GM12878 (cell line): ENCODE measurements at regions of chr3 and their contacts with region 1.

Region 1: DNA sequence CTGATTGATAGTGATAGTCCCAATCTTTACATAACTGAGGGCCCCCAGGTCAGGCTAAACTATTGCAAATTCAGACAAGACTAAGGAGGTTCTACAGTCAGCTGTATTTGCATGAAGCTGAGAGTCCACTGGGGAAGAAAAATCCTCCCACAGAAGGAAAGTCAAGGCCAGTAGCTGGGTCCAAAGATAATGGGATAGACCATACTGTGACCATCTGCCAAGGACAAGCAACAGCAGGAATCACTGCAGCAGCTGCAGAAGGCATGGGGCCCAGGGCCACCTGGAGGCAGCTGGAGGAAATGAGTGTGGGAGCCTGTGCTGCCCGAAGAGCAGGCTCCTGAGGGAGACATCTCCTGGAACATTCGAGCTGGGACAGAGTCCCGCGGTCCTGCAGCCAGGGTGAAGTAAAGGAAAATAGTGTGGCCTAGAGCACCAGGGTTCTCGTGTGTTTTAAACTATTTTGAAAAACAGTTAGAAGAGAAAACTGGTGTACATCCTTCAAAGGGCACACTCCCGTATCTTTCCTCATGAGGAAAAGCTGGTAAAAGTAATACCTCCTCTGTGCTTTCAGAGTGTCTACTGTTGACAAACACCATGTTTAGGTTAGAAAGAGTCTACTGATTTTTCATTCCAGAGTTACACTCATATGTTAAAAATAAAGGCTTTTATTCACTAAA is 13.2 kb upstream of the TMEM212 start:
- DNase-seq: no peak
- ATAC-seq: peak; percentile 85
- H3K4me3 ChIP-seq: no peak overlapping the region
- H3K27ac ChIP-seq: no peak overlapping the region
- H3K4me1 ChIP-seq: no peaks in the 10 kb centered on the region
- H3K27me3 ChIP-seq: no peaks in the 10 kb centered on the region; a peak in 1 of 4 replicates
- CTCF ChIP-seq: peak; percentile 52 to 80 (median 74)
- EP300 ChIP-seq: no peak
- POLR2A ChIP-seq: no peak
- RAD21 ChIP-seq: peak; percentile 53

Region 2: DNA sequence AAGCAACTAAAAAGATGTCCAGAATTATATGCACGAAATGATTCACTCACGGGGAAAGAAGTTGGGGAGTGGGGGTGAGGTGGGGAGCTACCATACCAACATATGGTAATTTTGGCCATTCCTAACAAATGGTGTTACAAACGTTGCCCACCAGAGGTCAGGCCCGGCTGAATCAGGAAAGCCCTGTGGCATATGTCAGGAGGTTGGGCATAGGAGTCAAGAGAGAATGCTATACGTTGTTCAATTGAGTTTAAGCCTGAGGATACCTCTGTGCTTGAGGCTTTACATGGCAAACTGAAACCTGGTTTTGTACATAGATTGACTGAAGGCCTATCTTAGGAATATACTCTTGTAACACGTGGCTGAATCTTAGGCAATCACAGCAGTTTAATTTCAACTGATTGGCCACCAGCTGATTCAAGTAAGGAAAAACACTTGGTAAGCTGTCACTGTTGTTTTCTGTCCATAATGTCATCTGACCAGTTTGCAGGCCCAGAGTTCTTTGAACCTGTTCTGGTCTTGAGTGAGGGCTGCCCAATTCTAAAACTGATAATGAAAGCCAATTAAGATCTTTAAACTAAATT is 780.0 kb before region 1 on chr3:
- CTCF ChIA-PET with region 1: interaction called, 12 read pairs
- POLR2A ChIA-PET with region 1: no interaction called
- RAD21 ChIA-PET with region 1: interaction called, 13 read pairs
- SMC1A ChIA-PET with region 1: interaction called, 18 read pairs
- in situ Hi-C with region 1: no loop called
- intact Hi-C with region 1: loop called (anchors 10 kb)
- DNase-seq: peak; percentile 34
- ATAC-seq: peak; percentile 91
- H3K4me3 ChIP-seq: no peak overlapping the region
- H3K27ac ChIP-seq: no peak overlapping the region
- H3K4me1 ChIP-seq: no peaks in the 10 kb centered on the region
- H3K27me3 ChIP-seq: no peaks in the 10 kb centered on the region
- CTCF ChIP-seq: peak; percentile 65 to 81 (median 72)
- EP300 ChIP-seq: no peak
- POLR2A ChIP-seq: no peak
- RAD21 ChIP-seq: peak; percentile 87

Region 3: DNA sequence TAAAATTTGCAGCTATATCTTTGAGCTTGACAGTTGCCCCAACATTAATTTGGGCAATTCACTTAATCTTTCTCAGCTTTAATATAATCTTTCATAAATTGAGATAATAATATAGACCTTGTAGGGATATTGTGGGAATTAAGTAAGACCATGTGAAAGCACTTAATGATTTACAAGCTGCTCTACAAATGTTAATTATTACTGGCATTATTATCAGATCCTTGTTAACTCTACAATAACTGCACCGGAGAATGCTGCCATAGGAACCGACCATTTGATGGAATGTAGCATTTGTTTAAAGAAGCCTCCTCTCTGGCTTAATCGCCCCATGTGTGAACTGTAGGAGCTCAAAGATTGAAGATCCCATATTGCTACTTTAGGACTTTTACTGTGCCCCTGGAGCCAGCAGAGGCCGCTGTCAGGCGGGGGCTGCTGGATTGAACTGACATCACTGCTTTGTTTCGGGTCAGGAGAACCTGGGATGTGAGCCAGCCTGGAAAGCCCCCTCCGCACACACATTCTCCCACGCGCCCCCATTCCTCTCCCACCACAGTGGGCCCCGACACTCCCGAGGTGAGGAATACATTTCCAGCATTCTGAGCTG is 215.6 kb before region 1 on chr3:
- CTCF ChIA-PET with region 1: interaction called, 60 read pairs
- POLR2A ChIA-PET with region 1: interaction called, 3 read pairs
- RAD21 ChIA-PET with region 1: interaction called, 46 read pairs
- SMC1A ChIA-PET with region 1: interaction called, 39 read pairs
- in situ Hi-C with region 1: no loop called
- intact Hi-C with region 1: loop called (anchors 2 kb)
- DNase-seq: no peak
- ATAC-seq: peak; percentile 83
- H3K4me3 ChIP-seq: no peak overlapping the region
- H3K27ac ChIP-seq: no peak overlapping the region
- H3K4me1 ChIP-seq: no peaks in the 10 kb centered on the region
- H3K27me3 ChIP-seq: no peaks in the 10 kb centered on the region; a peak in 1 of 4 replicates
- CTCF ChIP-seq: peak; percentile 64 to 83 (median 67)
- EP300 ChIP-seq: no peak
- POLR2A ChIP-seq: no peak
- RAD21 ChIP-seq: peak; percentile 63

Region 4: DNA sequence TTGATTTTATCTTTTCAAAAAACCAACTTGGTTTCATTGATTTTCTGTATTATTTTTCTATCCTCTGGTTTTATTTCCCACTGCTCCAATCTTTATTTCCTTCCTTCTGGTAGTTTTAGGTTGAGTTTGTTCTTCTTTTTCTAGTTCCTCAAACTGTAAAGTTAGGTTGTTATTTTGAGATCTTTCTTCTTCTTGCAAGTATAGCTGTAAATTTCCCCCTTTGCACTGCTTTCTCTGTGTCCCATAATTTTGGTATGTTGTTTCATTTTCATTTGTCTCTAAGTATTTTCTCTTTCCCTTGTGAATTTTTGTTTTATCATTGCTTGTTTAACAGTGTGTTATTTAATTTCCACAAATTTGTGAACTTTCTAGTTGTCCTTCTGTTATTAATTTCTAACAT is 139.7 kb before region 1 on chr3:
- CTCF ChIA-PET with region 1: interaction called, 15 read pairs
- POLR2A ChIA-PET with region 1: no interaction called
- RAD21 ChIA-PET with region 1: interaction called, 5 read pairs
- SMC1A ChIA-PET with region 1: interaction called, 23 read pairs
- in situ Hi-C with region 1: no loop called
- intact Hi-C with region 1: no loop called
- DNase-seq: peak; percentile 21
- ATAC-seq: peak; percentile 74
- H3K4me3 ChIP-seq: no peak overlapping the region
- H3K27ac ChIP-seq: peak overlapping the region; percentile 23
- H3K4me1 ChIP-seq: peaks cover 3% of the 10 kb centered on the region; the same call in 1 of the 2 replicates
- H3K27me3 ChIP-seq: no peaks in the 10 kb centered on the region
- CTCF ChIP-seq: no peak
- EP300 ChIP-seq: no peak
- POLR2A ChIP-seq: no peak
- RAD21 ChIP-seq: no peak

Region 5: DNA sequence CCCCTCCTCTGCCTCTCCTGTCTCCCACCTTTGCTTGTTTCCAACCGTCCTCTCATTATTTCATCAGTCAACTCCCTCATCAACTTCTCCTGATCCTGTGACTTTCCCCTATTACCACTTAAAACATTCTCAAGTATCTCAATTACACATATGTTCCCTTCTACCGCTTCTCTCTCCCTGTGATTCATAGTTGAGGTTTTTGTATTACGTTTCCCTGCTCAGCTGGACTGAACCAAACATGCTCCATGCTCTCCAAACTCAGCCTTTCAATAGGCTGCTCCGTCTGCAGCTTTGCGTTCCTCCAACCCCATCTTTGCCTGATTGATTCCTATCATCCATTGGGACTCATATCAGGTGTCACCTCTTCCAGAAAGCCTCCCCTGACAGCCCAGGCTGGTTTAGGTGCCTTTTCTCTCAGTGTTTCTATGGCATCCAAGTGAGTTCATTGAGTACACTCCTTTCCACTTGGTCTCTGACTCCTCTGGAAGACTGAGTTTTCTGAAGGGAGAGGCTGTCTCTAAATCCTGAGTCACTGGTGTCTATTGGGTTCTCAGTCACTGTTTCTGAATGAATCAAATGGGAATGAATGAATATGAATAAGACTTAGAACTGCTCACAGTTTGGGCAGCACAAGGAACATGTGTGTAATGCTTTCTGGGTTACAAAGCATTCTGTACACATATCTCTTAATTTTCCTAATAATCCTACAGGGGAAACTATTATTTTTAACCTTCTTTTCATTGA is 76.1 kb before region 1 on chr3:
- CTCF ChIA-PET with region 1: interaction called, 17 read pairs
- POLR2A ChIA-PET with region 1: interaction called, 3 read pairs
- RAD21 ChIA-PET with region 1: interaction called, 18 read pairs
- SMC1A ChIA-PET with region 1: interaction called, 25 read pairs
- in situ Hi-C with region 1: no loop called
- intact Hi-C with region 1: no loop called
- DNase-seq: no peak
- ATAC-seq: peak; percentile 13; the same call in 2 of the 3 replicates
- H3K4me3 ChIP-seq: no peak overlapping the region
- H3K27ac ChIP-seq: no peak overlapping the region; the same call in 1 of the 2 replicates
- H3K4me1 ChIP-seq: no peaks in the 10 kb centered on the region; the same call in 1 of the 2 replicates
- H3K27me3 ChIP-seq: peaks cover 0 to 3% of the 10 kb centered on the region in 2 experiments; a peak in 1 of 4 replicates
- CTCF ChIP-seq: no peak
- EP300 ChIP-seq: no peak
- POLR2A ChIP-seq: no peak
- RAD21 ChIP-seq: no peak

Region 6: GRCh38 chr3:171796625-171797264 is 33.2 kb before region 1 on chr3:
- CTCF ChIA-PET with region 1: interaction called, 76 read pairs
- POLR2A ChIA-PET with region 1: interaction called, 26 read pairs
- RAD21 ChIA-PET with region 1: interaction called, 62 read pairs
- SMC1A ChIA-PET with region 1: interaction called, 151 read pairs
- in situ Hi-C with region 1: no loop called
- intact Hi-C with region 1: no loop called
- DNase-seq: no peak
- ATAC-seq: peak; percentile 14
- H3K4me3 ChIP-seq: no peak overlapping the region
- H3K27ac ChIP-seq: peak overlapping the region; percentile 50
- H3K4me1 ChIP-seq: no peaks in the 10 kb centered on the region; the same call in 1 of the 2 replicates
- H3K27me3 ChIP-seq: no peaks in the 10 kb centered on the region
- CTCF ChIP-seq: no peak
- EP300 ChIP-seq: no peak
- POLR2A ChIP-seq: no peak
- RAD21 ChIP-seq: no peak

Region 7: GRCh38 chr3:172341482-172342059 is 511.6 kb after region 1 on chr3:
- CTCF ChIA-PET with region 1: interaction called, 16 read pairs
- POLR2A ChIA-PET with region 1: interaction called, 3 read pairs
- RAD21 ChIA-PET with region 1: interaction called, 23 read pairs
- SMC1A ChIA-PET with region 1: interaction called, 20 read pairs
- in situ Hi-C with region 1: no loop called
- intact Hi-C with region 1: loop called (anchors 1 kb)
- DNase-seq: peak; percentile 24
- ATAC-seq: peak; percentile 92
- H3K4me3 ChIP-seq: no peak overlapping the region
- H3K27ac ChIP-seq: no peak overlapping the region
- H3K4me1 ChIP-seq: no peaks in the 10 kb centered on the region
- H3K27me3 ChIP-seq: no peaks in the 10 kb centered on the region
- CTCF ChIP-seq: peak; percentile 53 to 67 (median 59); a peak in 5 of 6 replicates
- EP300 ChIP-seq: no peak
- POLR2A ChIP-seq: no peak
- RAD21 ChIP-seq: peak; percentile 73